K562 (cell line): ENCODE measurements at regions of chr9 and their contacts with region 1.

Region 1: GRCh38 chr9:137188490-137189296 is at the starts of genes ANAPC2 and SSNA1:
- DNase-seq: peak; percentile 93 to 98 (median 96)
- ATAC-seq: peak; percentile 96
- H3K4me3 ChIP-seq: peak within 1 kb of the TSS; percentile 98
- H3K27ac ChIP-seq: peak within 1 kb of the TSS; percentile 94
- H3K4me1 ChIP-seq: peaks cover 20 to 95% of the 10 kb centered on the region in 2 experiments
- H3K27me3 ChIP-seq: no peaks in the 10 kb centered on the region
- CTCF ChIP-seq: peak; percentile 59 to 91 (median 83)
- EP300 ChIP-seq: peak; percentile 52
- POLR2A ChIP-seq: peak; percentile 82
- RAD21 ChIP-seq: peak; percentile 83
- polyA plus RNA-seq, gene ANAPC2: 0.11 TPM in 1 of 2 experiments, not detected in the other
- polyA plus RNA-seq, gene SSNA1: 1.9 to 11.8 TPM

Region 2: DNA sequence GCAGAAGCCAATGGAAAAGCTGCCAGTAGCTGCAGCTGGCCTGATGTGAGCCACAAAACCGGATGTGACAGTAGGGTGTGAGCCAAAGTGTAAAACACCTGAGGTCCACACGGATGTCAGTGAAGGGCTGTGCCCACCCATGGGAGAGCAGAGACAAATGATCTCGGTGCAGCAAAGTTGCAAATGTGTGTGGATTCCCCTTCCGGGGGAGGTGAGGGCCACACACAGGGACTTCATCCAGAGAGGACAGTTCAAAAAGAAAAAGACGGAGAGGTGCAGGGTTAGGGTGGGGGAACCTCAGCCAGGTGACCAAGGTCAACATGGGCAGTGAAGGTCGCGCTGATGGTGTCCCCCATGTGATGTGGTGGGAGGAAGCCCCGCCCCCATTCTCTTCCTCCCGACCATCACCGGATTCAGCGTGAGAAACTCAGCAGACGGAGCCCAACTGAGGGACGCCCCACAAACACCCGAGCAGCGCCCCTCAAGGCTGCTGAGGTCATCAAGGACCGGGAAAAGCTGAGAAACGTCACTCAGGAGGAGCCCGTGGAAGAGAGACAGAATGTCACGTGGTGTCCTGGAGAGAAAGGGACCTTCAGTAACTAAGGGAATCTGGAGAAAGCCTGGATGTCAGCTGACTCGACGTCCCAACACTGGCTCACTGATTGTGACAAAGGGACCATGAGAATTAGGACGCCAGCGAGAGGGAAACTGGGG is 222.8 kb before region 1 on chr9:
- CTCF ChIA-PET with region 1: no interaction called
- POLR2A ChIA-PET with region 1: no interaction called
- in situ Hi-C with region 1: no loop called
- intact Hi-C with region 1: no loop called
- DNase-seq: peak; percentile 32 to 56 (median 48)
- ATAC-seq: no peak; the same call in 1 of the 3 replicates
- H3K4me3 ChIP-seq: no peak overlapping the region
- H3K27ac ChIP-seq: peak overlapping the region; percentile 38; the same call in 1 of the 3 replicates
- H3K4me1 ChIP-seq: peaks cover 26 to 80% of the 10 kb centered on the region in 2 experiments; a peak in 4 of 5 replicates
- H3K27me3 ChIP-seq: no peaks in the 10 kb centered on the region
- CTCF ChIP-seq: no peak
- EP300 ChIP-seq: no peak
- POLR2A ChIP-seq: no peak
- RAD21 ChIP-seq: no peak

Region 3: DNA sequence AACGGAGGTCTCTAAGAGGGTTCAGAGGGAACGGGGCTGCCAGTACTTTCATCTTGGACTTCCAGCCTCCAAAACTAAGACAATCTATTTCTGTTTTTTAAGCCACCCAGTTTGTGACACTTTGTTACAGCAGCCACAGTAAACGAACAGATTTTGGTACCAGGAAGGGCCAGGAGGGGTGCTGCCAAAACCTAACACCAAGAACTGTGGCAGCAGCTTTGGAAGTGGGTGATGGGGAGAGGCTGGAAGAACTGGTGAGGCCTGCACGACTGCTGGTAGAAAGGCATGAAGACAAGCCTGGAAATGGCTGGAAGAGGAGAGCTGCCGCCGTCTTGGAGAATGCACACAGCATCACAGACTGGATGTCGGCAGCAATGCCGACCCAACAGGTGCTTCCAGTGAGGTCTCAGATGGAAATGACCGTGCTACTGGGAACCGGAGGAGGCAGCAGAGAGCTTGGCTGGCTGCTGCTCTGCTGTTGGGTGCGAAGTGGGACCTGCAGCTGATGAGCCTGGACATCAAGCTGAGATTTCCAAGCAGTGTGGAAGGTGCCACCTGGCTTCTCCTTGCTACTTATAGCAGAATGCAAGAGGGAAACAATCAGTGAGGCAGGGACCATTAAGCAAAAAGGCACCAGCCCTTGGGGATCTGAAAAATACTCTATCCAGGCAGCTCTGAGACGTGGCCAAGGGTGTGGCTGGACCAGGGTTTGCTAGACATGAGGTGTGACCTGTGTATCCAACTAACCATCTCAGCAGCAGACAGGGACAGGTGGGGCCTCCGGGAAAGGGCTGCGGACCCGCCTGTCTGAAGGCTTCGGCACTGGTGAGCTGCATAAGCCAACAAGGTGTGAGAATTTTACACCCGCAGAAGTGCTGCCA is 12.2 kb before region 1 on chr9:
- CTCF ChIA-PET with region 1: no interaction called
- POLR2A ChIA-PET with region 1: interaction called, 13 read pairs
- in situ Hi-C with region 1: no loop called
- intact Hi-C with region 1: no loop called
- DNase-seq: peak; percentile 49 to 73 (median 62)
- ATAC-seq: peak; percentile 88
- H3K4me3 ChIP-seq: no peak overlapping the region
- H3K27ac ChIP-seq: no peak overlapping the region
- H3K4me1 ChIP-seq: peaks cover 3 to 81% of the 10 kb centered on the region in 2 experiments; a peak in 3 of 5 replicates
- H3K27me3 ChIP-seq: no peaks in the 10 kb centered on the region
- CTCF ChIP-seq: peak; percentile 73 to 82 (median 82)
- EP300 ChIP-seq: no peak
- POLR2A ChIP-seq: no peak
- RAD21 ChIP-seq: peak; percentile 12 to 56; a peak in 2 of 4 replicates

Region 4: GRCh38 chr9:137200311-137201204 is 11.9 kb after region 1 on chr9 and contains the start of gene TPRN:
- CTCF ChIA-PET with region 1: no interaction called
- POLR2A ChIA-PET with region 1: interaction called, 56 read pairs
- in situ Hi-C with region 1: no loop called
- intact Hi-C with region 1: no loop called
- DNase-seq: peak; percentile 99 to 100 (median 100)
- ATAC-seq: peak; percentile 96
- H3K4me3 ChIP-seq: peak within 1 kb of the TSS; percentile 52
- H3K27ac ChIP-seq: peak within 1 kb of the TSS; percentile 75
- H3K4me1 ChIP-seq: peaks cover 31 to 86% of the 10 kb centered on the region in 2 experiments
- H3K27me3 ChIP-seq: no peaks in the 10 kb centered on the region
- CTCF ChIP-seq: no peak
- EP300 ChIP-seq: no peak
- POLR2A ChIP-seq: peak; percentile 88
- RAD21 ChIP-seq: no peak
- polyA plus RNA-seq, gene TPRN: 0.31 to 0.34 TPM

Region 5: GRCh38 chr9:137551651-137552384 is 363.1 kb after region 1 on chr9 and contains the start of gene MRPL41:
- CTCF ChIA-PET with region 1: no interaction called
- POLR2A ChIA-PET with region 1: no interaction called
- in situ Hi-C with region 1: no loop called
- intact Hi-C with region 1: no loop called
- DNase-seq: peak; percentile 94 to 98 (median 94)
- ATAC-seq: peak; percentile 91
- H3K4me3 ChIP-seq: peak within 1 kb of the TSS; percentile 96
- H3K27ac ChIP-seq: peak within 1 kb of the TSS; percentile 97
- H3K4me1 ChIP-seq: peaks cover 2 to 37% of the 10 kb centered on the region in 2 experiments; a peak in 4 of 5 replicates
- H3K27me3 ChIP-seq: no peaks in the 10 kb centered on the region
- CTCF ChIP-seq: no peak
- EP300 ChIP-seq: peak; percentile 8; the same call in 1 of the 2 replicates
- POLR2A ChIP-seq: peak; percentile 81
- RAD21 ChIP-seq: no peak
- polyA plus RNA-seq, gene MRPL41: 2.6 to 4.1 TPM